ENCODE measurements at regions of chr9 and their contacts with region 1.

Region 1: DNA sequence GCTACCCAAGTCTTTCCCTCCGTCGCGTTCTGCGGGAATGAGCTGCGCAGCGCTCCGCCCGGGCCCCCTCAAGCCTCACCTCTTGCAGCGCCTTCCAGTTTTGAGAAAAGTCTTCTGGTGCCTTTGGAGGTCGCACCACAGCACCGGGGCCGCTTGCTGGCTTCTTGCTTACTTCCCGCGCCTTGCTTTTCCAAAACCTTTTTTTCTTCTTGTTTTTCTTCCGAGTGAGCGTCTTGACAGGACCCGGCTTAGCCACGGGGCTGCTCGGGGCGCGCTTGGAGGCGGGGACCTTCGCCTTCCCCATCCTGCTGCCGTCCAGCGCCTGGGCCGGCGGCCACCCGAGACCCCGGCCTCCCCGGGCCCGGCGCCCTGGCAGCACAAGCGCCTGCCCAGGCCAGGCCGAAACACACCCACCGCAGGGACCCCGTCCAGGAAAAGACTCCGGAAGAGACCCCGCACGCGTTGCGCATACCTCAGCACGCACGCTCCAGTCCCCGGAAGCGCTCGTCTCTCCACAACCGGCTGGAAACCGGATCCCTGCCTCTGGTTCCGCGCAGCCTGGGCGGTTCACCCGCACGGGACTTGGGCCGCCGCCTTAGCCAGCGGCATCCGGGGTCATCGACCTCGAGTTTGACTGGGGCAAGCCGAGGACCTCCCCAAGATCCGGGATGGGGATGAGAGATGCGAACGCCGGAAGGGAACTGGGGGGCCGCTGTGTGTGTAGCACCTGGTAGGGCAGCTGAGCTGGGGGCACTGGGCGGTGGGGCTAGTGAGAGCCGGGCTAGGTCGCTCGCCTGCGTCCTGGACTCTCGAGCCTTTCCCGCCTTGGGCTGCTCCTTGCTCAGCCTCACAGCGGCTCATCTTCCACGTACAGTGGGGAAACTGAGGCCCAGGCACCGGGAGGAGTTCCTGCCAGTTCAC is at the start of gene REXO4:
- DNase-seq: peak; percentile 92
- ATAC-seq: peak; percentile 87
- H3K4me3 Mint-ChIP-seq: peak within 1 kb of the TSS; percentile 92
- H3K27ac Mint-ChIP-seq: peak within 1 kb of the TSS; percentile 93
- H3K4me1 Mint-ChIP-seq: peaks cover 51% of the 10 kb centered on the region
- H3K27me3 Mint-ChIP-seq: no peaks in the 10 kb centered on the region
- total RNA-seq, gene REXO4: 25.9 to 34.3 TPM

Region 2: GRCh38 chr9:133184962-133185361 is 232.8 kb before region 1 on chr9:
- CTCF ChIA-PET with region 1: interaction called, 3 read pairs
- POLR2A ChIA-PET with region 1: no interaction called
- intact Hi-C with region 1: loop called in 1 of 2 experiments (anchors 5 kb)
- DNase-seq: peak; percentile 70
- ATAC-seq: peak; percentile 54
- H3K4me3 Mint-ChIP-seq: no peak overlapping the region
- H3K27ac Mint-ChIP-seq: no peak overlapping the region
- H3K4me1 Mint-ChIP-seq: peaks cover 23% of the 10 kb centered on the region
- H3K27me3 Mint-ChIP-seq: peaks cover 14% of the 10 kb centered on the region

Region 3: DNA sequence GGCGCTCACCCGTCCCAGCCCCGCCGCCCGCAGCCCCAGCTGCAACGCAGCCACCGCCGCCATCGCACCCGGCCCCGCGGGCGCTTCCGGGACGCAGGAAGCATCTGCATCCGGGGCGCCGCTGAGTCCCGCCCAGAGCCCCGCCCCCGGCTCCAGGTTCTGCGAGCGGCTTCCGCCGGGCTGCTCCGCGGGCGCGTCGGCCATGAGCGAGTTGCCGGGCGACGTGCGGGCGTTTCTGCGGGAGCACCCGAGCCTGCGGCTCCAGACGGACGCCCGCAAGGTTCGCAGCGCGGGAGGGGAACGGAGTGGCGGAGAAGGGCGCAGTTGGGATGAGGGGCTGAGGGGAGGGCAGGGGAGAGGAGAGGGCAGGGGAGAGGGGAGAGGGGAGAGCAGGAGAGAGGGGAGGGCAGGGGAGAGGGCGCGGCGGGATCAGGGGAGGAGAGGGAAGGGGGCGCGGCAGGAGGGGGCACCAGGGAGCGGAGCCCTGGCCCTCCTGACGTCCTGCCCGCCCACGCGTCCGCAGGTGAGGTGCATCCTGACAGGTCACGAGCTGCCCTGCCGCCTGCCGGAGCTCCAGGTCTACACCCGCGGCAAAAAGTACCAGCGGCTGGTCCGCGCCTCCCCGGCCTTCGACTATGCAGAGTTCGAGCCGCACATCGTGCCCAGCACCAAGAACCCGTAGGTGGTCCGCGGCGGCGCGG is 61.3 kb before region 1 on chr9 and contains the starts of genes SURF1 and SURF2:
- CTCF ChIA-PET with region 1: interaction called, 3 read pairs
- POLR2A ChIA-PET with region 1: interaction called, 3 read pairs
- intact Hi-C with region 1: loop called in 1 of 2 experiments (anchors 2 kb)
- DNase-seq: peak; percentile 96
- ATAC-seq: peak; percentile 84
- H3K4me3 Mint-ChIP-seq: peak within 1 kb of the TSS; percentile 91
- H3K27ac Mint-ChIP-seq: peak within 1 kb of the TSS; percentile 85
- H3K4me1 Mint-ChIP-seq: peaks cover 52% of the 10 kb centered on the region
- H3K27me3 Mint-ChIP-seq: no peaks in the 10 kb centered on the region
- total RNA-seq, gene SURF1: 17.4 to 29.1 TPM
- total RNA-seq, gene SURF2: 17.3 to 21.8 TPM

Region 4: DNA sequence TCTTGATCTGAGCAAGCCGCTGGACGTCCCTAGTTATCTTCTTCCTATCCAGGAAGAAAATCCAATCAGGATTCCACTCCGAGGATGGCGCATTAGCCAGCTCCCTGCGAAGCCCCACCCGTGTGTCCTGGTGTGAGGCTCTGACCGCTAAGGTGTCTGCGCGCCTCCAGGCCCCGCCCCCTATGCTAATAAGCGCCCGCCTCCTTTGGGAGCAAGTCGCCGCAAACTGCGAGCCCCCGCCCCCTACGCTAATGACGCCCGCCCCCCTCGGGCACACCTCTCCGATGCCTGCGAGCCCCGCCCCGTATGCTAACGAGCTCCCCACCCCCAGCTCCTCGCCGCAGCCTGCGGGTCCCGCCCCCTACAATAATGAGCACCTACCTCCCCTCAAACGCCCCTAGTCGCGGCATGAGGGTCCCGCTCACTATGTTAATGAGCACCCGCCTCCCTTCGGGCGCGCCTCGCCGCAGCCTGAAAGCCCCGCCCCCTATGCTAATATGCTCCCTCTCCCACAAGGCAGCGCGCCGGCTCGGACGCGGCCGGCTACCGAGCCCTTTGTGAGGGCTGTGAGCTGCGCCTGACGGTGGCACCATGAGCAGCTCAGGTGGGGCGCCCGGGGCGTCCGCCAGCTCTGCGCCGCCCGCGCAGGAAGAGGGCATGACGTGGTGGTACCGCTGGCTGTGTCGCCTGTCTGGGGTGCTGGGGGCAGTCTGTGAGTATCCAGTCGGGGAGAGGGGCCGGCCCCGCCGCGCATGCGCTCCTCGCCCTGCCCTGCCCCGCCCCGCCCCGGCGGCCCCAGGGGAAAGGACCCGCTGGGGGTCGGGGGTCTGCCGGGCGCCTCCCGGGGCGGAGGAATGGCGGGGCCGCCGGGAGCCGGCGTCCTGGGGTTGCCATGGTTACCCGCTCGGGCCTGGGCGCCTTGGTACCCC is 41.9 kb after region 1 on chr9 and contains the start of gene CACFD1:
- CTCF ChIA-PET with region 1: no interaction called
- POLR2A ChIA-PET with region 1: no interaction called
- intact Hi-C with region 1: loop called (anchors 1 kb)
- DNase-seq: peak; percentile 96
- ATAC-seq: peak; percentile 88
- H3K4me3 Mint-ChIP-seq: peak within 1 kb of the TSS; percentile 74
- H3K27ac Mint-ChIP-seq: peak within 1 kb of the TSS; percentile 42
- H3K4me1 Mint-ChIP-seq: no peaks in the 10 kb centered on the region
- H3K27me3 Mint-ChIP-seq: no peaks in the 10 kb centered on the region
- total RNA-seq, gene CACFD1: 0.87 to 0.90 TPM

Region 5: DNA sequence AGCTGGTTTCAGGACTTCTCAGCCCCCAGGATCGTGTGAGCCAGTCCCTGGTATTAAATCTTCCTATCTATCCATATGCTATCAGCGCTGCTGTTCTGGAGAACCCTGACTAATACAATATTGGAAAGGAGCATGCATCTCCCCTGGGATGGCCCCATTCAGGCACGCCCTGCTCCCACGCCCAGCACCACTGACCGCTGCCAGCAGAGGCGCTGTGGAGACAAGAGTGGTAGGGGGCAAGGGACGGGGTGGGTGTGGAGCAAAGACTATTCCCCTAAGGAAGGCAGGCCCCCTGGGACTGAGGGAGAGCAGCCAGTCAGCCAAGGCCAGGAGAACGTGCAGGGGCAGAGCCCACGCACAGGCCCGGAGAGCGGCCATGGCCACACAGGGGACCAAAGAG is 458.3 kb after region 1 on chr9:
- CTCF ChIA-PET with region 1: no interaction called
- POLR2A ChIA-PET with region 1: no interaction called
- intact Hi-C with region 1: no loop called
- DNase-seq: peak; percentile 14
- ATAC-seq: no peak
- H3K4me3 Mint-ChIP-seq: no peak overlapping the region
- H3K27ac Mint-ChIP-seq: no peak overlapping the region
- H3K4me1 Mint-ChIP-seq: no peaks in the 10 kb centered on the region
- H3K27me3 Mint-ChIP-seq: no peaks in the 10 kb centered on the region

Region 6: GRCh38 chr9:134024828-134025605 is 607.2 kb after region 1 on chr9 and contains the start of gene BRD3OS:
- CTCF ChIA-PET with region 1: no interaction called
- POLR2A ChIA-PET with region 1: no interaction called
- intact Hi-C with region 1: loop called in 1 of 2 experiments (anchors 1 kb)
- DNase-seq: peak; percentile 96
- ATAC-seq: peak; percentile 91
- H3K4me3 Mint-ChIP-seq: peak within 1 kb of the TSS; percentile 74
- H3K27ac Mint-ChIP-seq: no peak within 1 kb of the TSS
- H3K4me1 Mint-ChIP-seq: peaks cover 4% of the 10 kb centered on the region
- H3K27me3 Mint-ChIP-seq: no peaks in the 10 kb centered on the region
- total RNA-seq, gene BRD3OS: 15.1 to 18.0 TPM